ACHN (cell line): ENCODE measurements at regions of chr17 and their contacts with region 1.

Region 1: DNA sequence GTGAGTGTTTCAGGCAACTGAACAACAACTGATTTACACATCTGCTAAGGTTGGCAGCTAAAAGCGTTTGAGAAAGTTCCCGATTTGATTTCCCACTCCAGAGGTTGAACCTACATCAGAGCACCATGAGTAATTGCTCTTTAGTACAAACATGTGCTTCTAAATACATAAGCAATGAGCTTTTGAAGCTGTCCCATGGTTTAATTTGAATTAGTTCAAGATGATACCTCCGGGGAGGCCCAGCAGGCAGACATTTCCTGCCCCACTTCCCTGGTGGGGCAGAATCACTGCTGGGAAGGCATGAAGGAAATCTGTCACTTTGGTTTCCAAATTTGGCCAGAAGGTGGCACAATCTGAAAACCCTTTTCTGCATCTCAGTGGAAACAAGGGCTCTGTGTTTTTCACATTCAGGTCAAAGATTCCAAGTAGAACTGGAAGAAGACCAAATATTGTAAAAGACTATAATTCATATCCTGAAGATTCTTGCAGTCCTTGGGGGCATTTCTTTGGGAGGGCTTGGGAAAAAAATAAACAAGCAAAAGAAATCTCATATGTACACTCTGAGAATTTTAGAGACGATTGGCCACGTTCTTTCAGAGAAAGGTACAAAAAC is 176.2 kb upstream of the FAM20A start:
- DNase-seq: peak; percentile 58

Region 2: GRCh38 chr17:68302066-68302601 is 475.2 kb before region 1 on chr17:
- in situ Hi-C with region 1: no loop called
- DNase-seq: no peak

Region 3: GRCh38 chr17:68497885-68498319 is 279.4 kb before region 1 on chr17:
- in situ Hi-C with region 1: no loop called
- DNase-seq: no peak

Region 4: DNA sequence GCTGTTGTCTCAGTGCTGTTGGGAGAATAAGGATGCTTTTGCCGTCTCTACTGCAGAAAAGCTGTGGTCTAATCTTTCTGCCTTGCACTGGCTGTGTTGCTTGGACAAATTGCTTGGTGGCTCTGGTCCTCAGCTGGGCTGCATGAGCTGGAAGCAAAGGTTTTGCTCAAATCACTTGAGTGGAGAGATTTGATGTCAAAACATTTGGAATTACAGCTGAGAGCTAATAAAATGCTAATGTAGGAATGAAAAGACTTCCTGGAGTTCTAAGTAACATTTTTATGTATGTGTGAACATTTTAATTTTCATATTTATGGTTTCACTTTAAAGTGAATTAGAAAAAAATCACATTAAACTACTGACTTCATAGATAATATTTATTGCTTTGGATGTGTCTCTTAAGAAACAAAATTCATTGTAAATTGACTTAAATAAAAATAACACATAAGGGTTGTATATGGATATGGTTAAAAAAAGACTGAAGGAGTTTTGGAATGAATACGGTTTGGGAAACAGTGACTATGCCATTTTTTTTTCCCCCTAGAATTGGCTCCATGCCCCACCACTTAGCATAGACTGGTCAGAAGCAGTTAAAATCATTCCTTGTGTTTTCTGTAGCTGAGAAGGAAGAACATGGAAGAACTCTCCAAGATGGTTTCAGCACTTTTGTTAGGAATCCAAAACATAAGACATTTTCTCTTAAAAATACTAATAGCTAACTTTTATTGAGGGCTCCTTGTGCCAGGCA is 136.9 kb before region 1 on chr17:
- in situ Hi-C with region 1: no loop called
- DNase-seq: no peak

Region 5: GRCh38 chr17:69235338-69235930 is 458.1 kb after region 1 on chr17:
- in situ Hi-C with region 1: loop called (anchors 25 kb)
- DNase-seq: peak; percentile 81